Posterior vena cava (tissue), 2 donors: ENCODE measurements at regions of chr5 and their contacts with region 1.

Region 1: DNA sequence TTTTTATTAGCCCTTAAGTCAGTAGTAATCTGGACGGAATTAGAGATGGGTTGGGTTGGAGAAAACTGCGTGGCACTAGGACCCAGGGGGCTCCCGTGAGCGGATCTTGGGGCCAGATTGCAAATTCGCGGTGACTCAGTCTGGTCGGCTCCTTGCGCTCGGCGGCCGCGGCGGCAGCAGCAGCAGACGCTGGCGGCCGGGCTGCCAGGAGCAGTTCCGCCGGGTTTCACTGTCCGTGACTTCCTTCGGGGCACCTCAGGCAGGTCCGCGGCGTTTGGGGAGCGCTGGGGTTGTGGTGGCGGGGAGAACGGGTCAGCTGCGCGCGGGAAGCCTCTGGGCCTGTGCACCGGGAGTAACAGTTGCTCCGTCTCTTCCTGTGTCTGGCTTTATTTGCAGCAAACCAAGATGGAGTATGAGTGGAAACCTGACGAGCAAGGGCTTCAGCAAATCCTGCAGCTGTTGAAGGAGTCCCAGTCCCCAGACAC is 31.6 kb downstream of the TNPO1 start:
- DNase-seq: peak; percentile 97

Region 2: GRCh38 chr5:72611118-72611730 is 236.8 kb before region 1 on chr5:
- intact Hi-C with region 1: loop called in 1 of 2 experiments (anchors 10 kb)
- DNase-seq: peak; percentile 88

Region 3: DNA sequence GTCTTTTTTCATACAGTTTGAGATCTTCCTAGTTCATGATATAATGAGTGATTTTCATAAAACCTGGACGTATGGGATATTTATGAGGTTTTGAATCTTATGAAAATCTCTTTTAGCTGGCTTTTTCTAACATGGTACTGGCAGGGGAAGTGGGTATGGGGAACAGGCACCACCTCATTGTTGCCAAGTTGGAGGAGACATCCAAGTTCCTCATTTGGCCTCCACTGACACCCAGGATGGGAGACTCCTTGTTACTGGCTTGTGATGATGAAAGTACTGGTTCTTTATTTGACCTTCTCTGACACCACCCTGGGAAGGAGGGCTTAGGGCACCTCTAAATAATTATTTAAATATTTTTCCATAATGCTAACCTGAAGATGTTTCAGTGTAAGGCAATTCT is 35.5 kb before region 1 on chr5:
- intact Hi-C with region 1: no loop called
- DNase-seq: no peak